ENCODE measurements at regions of chr11 and their contacts with region 1.

Region 1: GRCh38 chr11:12331239-12331874 is 46.0 kb upstream of the PARVA start:
- DNase-seq: peak; percentile 93
- ATAC-seq: peak; percentile 87
- H3K4me3 ChIP-seq: no peak overlapping the region
- H3K27ac ChIP-seq: no peak overlapping the region
- H3K4me1 ChIP-seq: no peaks in the 10 kb centered on the region
- H3K27me3 ChIP-seq: no peaks in the 10 kb centered on the region
- CTCF ChIP-seq: peak; percentile 87

Region 2: GRCh38 chr11:12377824-12378593 is 46.7 kb after region 1 on chr11:
- CTCF ChIA-PET with region 1: interaction called, 6 read pairs
- POLR2A ChIA-PET with region 1: no interaction called
- intact Hi-C with region 1: loop called (anchors 1 kb)
- DNase-seq: peak; percentile 83
- ATAC-seq: peak; percentile 84
- H3K4me3 ChIP-seq: peak overlapping the region; percentile 84
- H3K27ac ChIP-seq: peak overlapping the region; percentile 77
- H3K4me1 ChIP-seq: peaks cover 14% of the 10 kb centered on the region; the same call in 1 of the 2 replicates
- H3K27me3 ChIP-seq: no peaks in the 10 kb centered on the region
- CTCF ChIP-seq: no peak

Region 3: DNA sequence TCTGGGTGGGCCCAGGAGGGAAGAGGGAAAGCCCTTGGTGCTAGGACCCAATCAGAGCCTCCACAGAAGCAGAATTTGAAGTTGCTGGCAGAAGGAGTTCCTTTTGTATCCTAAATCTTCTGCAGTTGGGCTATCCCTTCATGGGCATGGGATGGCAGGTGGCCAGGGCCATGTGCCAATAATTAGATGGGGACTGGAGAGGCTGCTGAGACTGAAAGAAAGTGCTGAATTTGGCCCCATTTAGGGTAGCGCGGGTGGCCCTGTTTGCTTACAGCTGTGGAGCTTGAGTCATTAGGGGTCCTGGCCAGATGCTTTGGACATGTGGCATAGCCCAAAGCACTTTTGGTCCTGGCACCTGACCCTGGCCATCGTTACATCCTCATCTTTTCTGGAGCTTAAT is 73.1 kb after region 1 on chr11:
- CTCF ChIA-PET with region 1: no interaction called
- POLR2A ChIA-PET with region 1: no interaction called
- intact Hi-C with region 1: no loop called
- DNase-seq: no peak
- ATAC-seq: no peak
- H3K4me3 ChIP-seq: no peak overlapping the region
- H3K27ac ChIP-seq: no peak overlapping the region
- H3K4me1 ChIP-seq: peaks cover 7% of the 10 kb centered on the region
- H3K27me3 ChIP-seq: no peaks in the 10 kb centered on the region
- CTCF ChIP-seq: no peak

Region 4: DNA sequence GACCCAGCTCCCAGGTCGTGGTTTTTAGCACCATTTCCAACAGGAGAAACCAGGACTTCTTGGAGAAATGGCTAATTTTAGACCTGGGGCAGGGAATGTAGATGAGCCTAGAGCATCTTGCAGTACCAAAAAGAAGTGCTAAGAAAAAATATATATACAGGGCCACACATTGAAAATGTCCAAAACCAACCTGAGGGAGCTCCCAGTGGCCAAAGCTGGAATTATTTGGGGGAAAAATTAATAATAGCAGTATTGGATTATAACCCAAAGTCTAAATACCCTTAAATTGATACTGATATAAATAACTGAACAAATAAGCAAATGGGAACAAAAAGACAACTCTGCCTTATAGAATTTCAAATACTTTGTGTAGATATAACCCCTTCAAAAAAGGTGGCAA is 154.0 kb after region 1 on chr11:
- CTCF ChIA-PET with region 1: no interaction called
- POLR2A ChIA-PET with region 1: interaction called, 6 read pairs
- intact Hi-C with region 1: loop called (anchors 5 kb)
- DNase-seq: peak; percentile 31
- ATAC-seq: 0 out of 2 replicates have a peak, but pooled peaks have one; percentile 22
- H3K4me3 ChIP-seq: no peak overlapping the region
- H3K27ac ChIP-seq: no peak overlapping the region
- H3K4me1 ChIP-seq: no peaks in the 10 kb centered on the region
- H3K27me3 ChIP-seq: no peaks in the 10 kb centered on the region
- CTCF ChIP-seq: peak; percentile 69

Region 5: DNA sequence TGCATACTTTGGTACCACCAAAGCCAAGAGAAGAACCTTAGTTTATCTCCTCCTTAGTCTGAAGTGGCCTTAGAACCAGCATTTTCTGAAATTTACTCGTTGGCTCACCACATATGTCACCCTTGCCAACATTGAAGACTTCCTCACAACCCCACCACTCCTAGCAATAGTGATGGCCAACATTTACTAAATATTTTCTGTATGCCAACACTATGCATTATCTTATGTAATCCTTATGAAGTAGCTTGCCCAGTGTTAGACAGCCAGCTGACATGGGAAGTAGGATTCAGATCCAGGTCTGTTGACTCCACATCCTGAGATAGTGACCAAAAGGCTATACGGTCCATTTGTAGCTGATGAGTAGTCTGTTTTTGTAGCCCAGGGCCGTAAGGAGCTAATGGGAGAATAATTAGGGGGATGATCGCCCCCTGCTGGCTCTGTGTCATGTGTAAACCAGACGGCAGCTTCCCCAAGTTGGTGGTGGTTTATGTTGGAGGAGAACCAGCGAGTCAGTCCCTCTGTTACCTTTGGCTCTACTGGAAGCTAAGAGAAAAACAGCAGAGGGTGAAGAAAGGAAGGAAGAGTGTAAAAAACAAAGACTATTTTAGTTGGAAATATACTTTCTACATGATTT is 557.3 kb after region 1 on chr11:
- CTCF ChIA-PET with region 1: interaction called, 7 read pairs
- POLR2A ChIA-PET with region 1: no interaction called
- intact Hi-C with region 1: loop called (anchors 1 kb)
- DNase-seq: peak; percentile 82
- ATAC-seq: peak; percentile 88
- H3K4me3 ChIP-seq: no peak overlapping the region
- H3K27ac ChIP-seq: no peak overlapping the region
- H3K4me1 ChIP-seq: 0 out of 2 replicates have a peak, but pooled peaks cover 4% of the 10 kb centered on the region
- H3K27me3 ChIP-seq: no peaks in the 10 kb centered on the region
- CTCF ChIP-seq: peak; percentile 87

Region 6: GRCh38 chr11:12893787-12894672 is 562.7 kb after region 1 on chr11:
- CTCF ChIA-PET with region 1: interaction called, 7 read pairs
- POLR2A ChIA-PET with region 1: no interaction called
- intact Hi-C with region 1: loop called (anchors 1 kb)
- DNase-seq: peak; percentile 67
- ATAC-seq: peak; percentile 64
- H3K4me3 ChIP-seq: no peak overlapping the region
- H3K27ac ChIP-seq: no peak overlapping the region
- H3K4me1 ChIP-seq: no peaks in the 10 kb centered on the region
- H3K27me3 ChIP-seq: no peaks in the 10 kb centered on the region
- CTCF ChIP-seq: peak; percentile 89

Region 7: GRCh38 chr11:13152736-13153533 is 821.6 kb after region 1 on chr11:
- CTCF ChIA-PET with region 1: interaction called, 5 read pairs
- POLR2A ChIA-PET with region 1: no interaction called
- intact Hi-C with region 1: loop called (anchors 2 kb)
- DNase-seq: peak; percentile 60
- ATAC-seq: no peak
- H3K4me3 ChIP-seq: no peak overlapping the region
- H3K27ac ChIP-seq: no peak overlapping the region
- H3K4me1 ChIP-seq: peaks cover 3% of the 10 kb centered on the region; the same call in 1 of the 2 replicates
- H3K27me3 ChIP-seq: no peaks in the 10 kb centered on the region
- CTCF ChIP-seq: peak; percentile 70